Uterus (tissue), 4 donors: ENCODE measurements at regions of chr10 and their contacts with region 1.

Region 1: DNA sequence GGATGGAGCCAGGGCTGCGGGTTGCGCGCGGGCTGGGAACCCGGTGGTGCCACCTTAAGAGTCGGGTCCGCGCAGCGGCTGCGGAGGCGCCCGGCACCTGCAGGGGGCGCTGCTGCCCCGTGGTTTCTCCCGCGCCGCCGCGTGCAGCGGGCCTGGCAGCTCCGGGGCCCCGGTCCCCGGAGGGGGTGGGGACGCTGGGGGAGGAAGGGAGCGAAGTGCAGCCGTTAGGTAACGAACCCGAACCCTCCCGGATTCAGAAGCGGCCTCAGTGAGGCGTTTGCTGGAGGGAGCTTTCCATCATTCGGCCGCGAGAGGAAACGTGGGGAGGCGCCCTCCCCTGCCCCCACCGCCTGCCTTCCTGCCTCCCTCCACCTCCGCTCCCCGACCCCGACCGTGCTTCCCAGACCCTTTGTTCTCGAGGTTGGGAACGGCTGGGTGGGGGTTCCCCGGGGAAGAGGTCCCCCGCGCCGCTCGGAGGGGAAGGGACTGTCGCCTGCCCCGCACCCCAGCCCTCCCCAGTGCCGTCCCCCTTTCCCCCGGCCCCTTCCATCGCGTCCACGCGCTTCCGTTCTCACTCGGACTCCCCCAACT is 29.6 kb downstream of the SKIDA1 start:
- DNase-seq: peak; percentile 71 to 84
- H3K4me3 ChIP-seq: peak overlapping the region; percentile 46 to 68
- H3K27ac ChIP-seq: peak overlapping the region; percentile 16 to 72
- H3K4me1 ChIP-seq: peaks cover 0 to 8% of the 10 kb centered on the region in 2 donors
- H3K27me3 ChIP-seq: no peaks in the 10 kb centered on the region
- CTCF ChIP-seq: peak; percentile 89 to 99 (median 96)
- POLR2A ChIP-seq: no peak

Region 2: DNA sequence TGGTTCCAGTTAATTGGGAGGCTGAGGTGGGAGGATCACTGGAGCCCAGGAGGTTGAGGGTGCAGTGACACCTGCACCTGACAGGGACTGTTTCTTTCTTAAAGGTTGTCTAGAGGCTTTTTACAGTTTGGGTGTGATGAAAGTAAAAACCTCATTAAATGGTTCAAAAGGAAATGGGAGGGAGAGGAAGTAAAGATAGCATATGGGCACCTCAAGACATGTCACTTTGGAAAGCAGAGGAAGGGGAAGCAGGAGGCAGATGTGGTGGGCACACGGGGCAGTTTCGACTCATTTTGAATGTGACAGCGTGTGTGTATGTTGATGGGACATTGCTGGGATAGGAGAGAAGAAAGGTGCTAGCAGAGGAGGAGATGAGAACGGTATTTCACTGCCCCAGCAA is 241.3 kb after region 1 on chr10:
- intact Hi-C with region 1: loop called (anchors 5 kb)
- DNase-seq: no peak
- H3K4me3 ChIP-seq: no peak overlapping the region
- H3K27ac ChIP-seq: no peak overlapping the region
- H3K4me1 ChIP-seq: no peaks in the 10 kb centered on the region
- H3K27me3 ChIP-seq: no peaks in the 10 kb centered on the region
- CTCF ChIP-seq: no peak
- POLR2A ChIP-seq: no peak

Region 3: DNA sequence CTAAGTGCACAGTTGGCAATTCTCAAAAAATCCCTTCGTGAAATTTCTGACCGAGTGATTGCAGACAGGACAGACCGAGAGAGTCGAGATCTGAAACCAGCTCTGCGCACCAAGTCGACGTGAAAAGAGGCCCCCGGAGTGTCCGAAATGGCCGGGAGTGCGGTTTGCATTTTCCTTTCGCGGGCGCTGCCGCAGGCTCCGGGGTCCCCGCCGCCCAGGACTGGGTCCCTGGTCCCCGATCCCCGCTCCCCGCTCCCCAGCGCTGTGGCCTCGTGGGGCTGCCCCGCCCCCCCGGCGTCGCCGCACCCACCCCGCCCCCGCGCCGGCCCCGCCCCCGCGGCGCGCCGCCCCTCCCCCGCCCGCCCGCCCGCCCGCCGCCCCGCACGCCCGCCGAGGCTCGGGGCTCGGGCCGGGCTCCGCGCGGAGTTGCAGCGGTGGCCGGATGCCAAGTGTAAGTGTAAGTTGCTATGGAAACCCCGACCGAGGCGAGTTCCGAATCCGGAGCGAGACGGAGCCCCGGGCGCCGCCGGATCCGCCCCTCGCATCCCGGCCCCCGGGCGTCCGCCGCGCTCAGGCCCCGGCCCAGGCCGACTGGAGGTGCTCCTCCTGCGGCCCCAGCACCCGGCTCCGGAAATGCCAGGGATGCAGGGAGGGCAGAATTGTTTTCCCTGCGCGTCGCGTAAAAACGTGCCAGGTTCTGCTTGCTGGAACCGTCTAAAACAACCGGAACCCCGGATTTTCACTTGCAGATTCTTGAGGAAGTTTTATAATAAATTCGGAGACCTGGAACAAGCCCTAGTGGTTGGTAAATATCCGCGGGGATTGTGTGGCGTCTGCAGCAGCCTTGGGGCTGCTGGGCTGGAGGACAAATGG is 829.7 kb after region 1 on chr10:
- intact Hi-C with region 1: loop called (anchors 10 kb)
- DNase-seq: peak; percentile 78 to 79
- H3K4me3 ChIP-seq: peak overlapping the region; percentile 44 to 53
- H3K27ac ChIP-seq: peak overlapping the region; percentile 67 to 80
- H3K4me1 ChIP-seq: no peaks in the 10 kb centered on the region
- H3K27me3 ChIP-seq: no peaks in the 10 kb centered on the region
- CTCF ChIP-seq: no peak
- POLR2A ChIP-seq: no peak